ENCODE measurements at regions of chr4 and their contacts with region 1.

Region 1: DNA sequence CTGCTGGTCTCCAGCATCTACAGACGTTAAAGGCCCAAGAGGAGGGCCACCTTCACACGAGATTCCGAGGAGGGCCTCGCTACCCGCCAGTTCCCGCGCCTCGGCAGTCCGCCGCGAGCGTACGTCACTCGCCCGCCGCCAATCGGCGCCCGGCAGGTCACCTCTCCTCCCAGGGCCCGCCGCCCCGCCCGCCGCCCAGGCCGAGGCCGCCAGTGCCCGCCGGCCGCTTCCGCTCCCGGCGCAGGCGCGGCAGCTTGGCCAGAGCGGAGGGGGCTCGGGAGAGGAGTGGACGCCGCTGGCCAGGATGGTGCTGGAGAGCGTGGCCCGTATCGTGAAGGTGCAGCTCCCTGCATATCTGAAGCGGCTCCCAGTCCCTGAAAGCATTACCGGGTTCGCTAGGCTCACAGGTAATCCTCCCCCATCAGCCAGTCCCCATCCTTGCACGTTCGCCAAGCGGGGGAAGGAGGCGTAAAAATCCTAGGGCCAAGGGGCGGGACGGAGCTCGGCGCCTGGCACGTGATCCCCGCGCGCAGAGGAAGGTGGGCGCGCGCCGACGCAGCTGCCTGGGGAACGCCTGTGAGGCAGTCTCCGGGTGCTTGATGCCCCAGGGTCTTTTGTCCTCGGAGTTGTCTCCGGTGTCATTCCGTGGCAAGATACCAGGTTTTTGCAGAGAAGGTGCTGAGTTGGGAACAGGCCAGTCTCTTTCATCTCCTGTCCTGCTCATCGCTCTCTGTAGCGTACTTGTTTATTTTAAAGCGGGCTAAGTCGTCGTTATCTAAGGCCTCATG is at the start of gene CISD2:
- DNase-seq: peak; percentile 91 to 93
- H3K4me3 ChIP-seq: peak within 1 kb of the TSS; percentile 42 to 91 (median 70)
- H3K27ac ChIP-seq: peak within 1 kb of the TSS; percentile 76 to 89 (median 84)
- H3K4me1 ChIP-seq: peaks cover 7 to 12% of the 10 kb centered on the region in 2 donors
- H3K27me3 ChIP-seq: no peaks in the 10 kb centered on the region
- CTCF ChIP-seq: no peak
- POLR2A ChIP-seq: peak; percentile 3 to 88
- total RNA-seq, gene CISD2: 29.3 to 37.0 (median 33.7) TPM

Region 2: GRCh38 chr4:102826890-102827673 is 41.9 kb before region 1 on chr4 and contains the start of gene UBE2D3:
- intact Hi-C with region 1: loop called (anchors 5 kb)
- DNase-seq: peak; percentile 93
- H3K4me3 ChIP-seq: peak within 1 kb of the TSS; percentile 89 to 99 (median 96)
- H3K27ac ChIP-seq: peak within 1 kb of the TSS; percentile 100
- H3K4me1 ChIP-seq: peaks cover 25 to 33% of the 10 kb centered on the region in 2 donors
- H3K27me3 ChIP-seq: no peaks in the 10 kb centered on the region
- CTCF ChIP-seq: peak in 1 of 6 experiments; percentile 8
- POLR2A ChIP-seq: peak; percentile 85 to 92
- total RNA-seq, gene UBE2D3: 379 to 633 (median 495) TPM

Region 3: GRCh38 chr4:103067841-103068547 is 199.0 kb after region 1 on chr4:
- intact Hi-C with region 1: no loop called
- DNase-seq: no peak
- H3K4me3 ChIP-seq: no peak overlapping the region
- H3K27ac ChIP-seq: no peak overlapping the region
- H3K4me1 ChIP-seq: no peaks in the 10 kb centered on the region
- H3K27me3 ChIP-seq: no peaks in the 10 kb centered on the region
- CTCF ChIP-seq: no peak
- POLR2A ChIP-seq: no peak